Ascending aorta (tissue), 2 donors: ENCODE measurements at regions of chr17 and their contacts with region 1.

Region 1: GRCh38 chr17:4412933-4413831 is 20.6 kb upstream of the SPNS3 start:
- DNase-seq: peak; percentile 42 to 96
- H3K4me3 ChIP-seq: no peak overlapping the region
- H3K27ac ChIP-seq: no peak overlapping the region
- H3K4me1 ChIP-seq: peaks cover 0 to 4% of the 10 kb centered on the region in 2 donors
- H3K27me3 ChIP-seq: no peaks in the 10 kb centered on the region
- CTCF ChIP-seq: peak; percentile 89 to 94 (median 89)

Region 2: GRCh38 chr17:4199818-4200402 is 213.3 kb before region 1 on chr17:
- intact Hi-C with region 1: loop called (anchors 5 kb)
- DNase-seq: peak in 1 of 2 donors; percentile 59
- H3K4me3 ChIP-seq: no peak overlapping the region
- H3K27ac ChIP-seq: no peak overlapping the region
- H3K4me1 ChIP-seq: peaks cover 0 to 11% of the 10 kb centered on the region in 2 donors
- H3K27me3 ChIP-seq: no peaks in the 10 kb centered on the region
- CTCF ChIP-seq: peak; percentile 43 to 74 (median 70)

Region 3: GRCh38 chr17:4304417-4305027 is 108.7 kb before region 1 on chr17:
- intact Hi-C with region 1: loop called (anchors 5 kb)
- DNase-seq: no peak
- H3K4me3 ChIP-seq: no peak overlapping the region
- H3K27ac ChIP-seq: no peak overlapping the region
- H3K4me1 ChIP-seq: peaks cover 0 to 5% of the 10 kb centered on the region in 2 donors
- H3K27me3 ChIP-seq: no peaks in the 10 kb centered on the region
- CTCF ChIP-seq: peak; percentile 31 to 68 (median 67)

Region 4: GRCh38 chr17:4433515-4434031 is 20.4 kb after region 1 on chr17 and contains the start of gene SPNS3:
- intact Hi-C with region 1: no loop called
- DNase-seq: no peak
- H3K4me3 ChIP-seq: no peak within 1 kb of the TSS
- H3K27ac ChIP-seq: no peak within 1 kb of the TSS
- H3K4me1 ChIP-seq: no peaks in the 10 kb centered on the region
- H3K27me3 ChIP-seq: no peaks in the 10 kb centered on the region
- CTCF ChIP-seq: no peak
- total RNA-seq, gene SPNS3: not detected

Region 5: GRCh38 chr17:4463818-4464476 is 50.8 kb after region 1 on chr17:
- intact Hi-C with region 1: no loop called
- DNase-seq: no peak
- H3K4me3 ChIP-seq: no peak overlapping the region
- H3K27ac ChIP-seq: no peak overlapping the region
- H3K4me1 ChIP-seq: no peaks in the 10 kb centered on the region
- H3K27me3 ChIP-seq: no peaks in the 10 kb centered on the region
- CTCF ChIP-seq: no peak

Region 6: GRCh38 chr17:4815043-4815675 is 402.0 kb after region 1 on chr17:
- intact Hi-C with region 1: no loop called
- DNase-seq: no peak
- H3K4me3 ChIP-seq: no peak overlapping the region
- H3K27ac ChIP-seq: no peak overlapping the region
- H3K4me1 ChIP-seq: no peaks in the 10 kb centered on the region
- H3K27me3 ChIP-seq: no peaks in the 10 kb centered on the region
- CTCF ChIP-seq: no peak